BJ (cell line): ENCODE measurements at regions of chr14 and their contacts with region 1.

Region 1: GRCh38 chr14:23379366-23380196 is 2.7 kb downstream of the CMTM5 start:
- DNase-seq: no peak
- H3K4me3 ChIP-seq: no peak overlapping the region
- H3K27me3 ChIP-seq: peaks cover 9% of the 10 kb centered on the region
- CTCF ChIP-seq: peak; percentile 94

Region 2: GRCh38 chr14:23209651-23210423 is 169.7 kb before region 1 on chr14:
- CTCF ChIA-PET with region 1: no interaction called
- POLR2A ChIA-PET with region 1: no interaction called
- DNase-seq: no peak
- H3K4me3 ChIP-seq: no peak overlapping the region
- H3K27me3 ChIP-seq: peaks cover 2% of the 10 kb centered on the region; the same call in 1 of the 2 replicates
- CTCF ChIP-seq: no peak

Region 3: DNA sequence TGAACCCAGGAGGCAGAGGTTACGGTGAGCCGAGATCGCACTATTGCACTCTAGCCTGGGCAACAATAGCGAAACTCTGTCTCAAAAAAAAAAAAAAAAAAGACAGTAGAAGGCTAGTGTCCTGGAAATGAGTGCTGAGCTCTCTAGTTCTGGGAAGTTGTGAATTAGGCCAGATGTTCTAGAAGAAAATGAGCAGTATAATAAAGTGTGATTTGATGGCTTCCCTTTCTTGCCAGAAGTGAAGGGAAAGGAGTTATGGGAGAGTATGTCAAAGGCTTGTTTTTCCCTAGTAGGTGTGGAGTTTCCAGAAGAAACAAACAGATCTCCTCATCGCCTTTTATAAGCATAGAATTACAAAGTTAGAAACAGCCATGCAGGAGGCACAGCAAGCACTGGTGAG is 121.3 kb before region 1 on chr14:
- CTCF ChIA-PET with region 1: interaction called, 16 read pairs
- POLR2A ChIA-PET with region 1: no interaction called
- DNase-seq: no peak
- H3K4me3 ChIP-seq: no peak overlapping the region
- H3K27me3 ChIP-seq: peaks cover 7% of the 10 kb centered on the region; the same call in 1 of the 2 replicates
- CTCF ChIP-seq: no peak

Region 4: DNA sequence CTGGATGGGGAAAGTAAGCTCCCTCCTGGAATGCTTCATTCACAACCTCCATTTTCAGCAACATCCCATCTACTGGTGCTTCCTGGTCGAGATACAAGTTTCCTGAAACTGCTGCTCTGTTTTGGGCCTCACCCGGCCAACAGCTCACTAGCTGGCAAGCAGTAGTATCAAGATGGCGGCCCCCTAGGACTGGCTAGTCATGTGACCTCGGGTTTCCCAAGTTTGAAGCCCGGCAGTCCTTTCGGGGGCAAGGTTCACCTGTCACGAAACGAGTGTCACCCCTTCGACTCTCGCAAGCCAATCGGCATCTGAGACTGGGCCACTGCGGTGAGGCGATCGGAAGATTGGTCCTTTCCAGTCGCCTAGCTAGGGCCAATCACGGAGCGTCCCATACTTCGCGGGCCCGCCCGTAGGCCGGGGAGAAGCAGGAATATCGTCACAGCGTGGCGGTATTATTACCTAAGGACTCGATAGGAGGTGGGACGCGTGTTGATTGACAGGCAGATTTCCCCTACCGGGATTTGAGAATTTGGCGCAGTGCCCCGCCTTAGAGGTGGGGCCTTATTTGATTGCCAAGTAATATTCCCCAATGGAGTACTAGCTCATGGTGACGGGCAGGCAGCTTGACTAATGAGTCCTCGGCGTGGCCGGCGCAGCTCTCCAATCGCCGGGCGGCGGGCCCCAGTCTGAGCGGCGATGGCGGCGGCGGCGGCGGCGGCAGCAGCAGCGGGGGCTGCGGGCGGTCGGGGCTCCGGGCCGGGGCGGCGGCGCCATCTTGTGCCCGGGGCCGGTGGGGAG is 58.6 kb before region 1 on chr14 and contains the start of gene PABPN1:
- CTCF ChIA-PET with region 1: interaction called, 132 read pairs
- POLR2A ChIA-PET with region 1: no interaction called
- DNase-seq: peak; percentile 98
- H3K4me3 ChIP-seq: peak within 1 kb of the TSS; percentile 60
- H3K27me3 ChIP-seq: no peaks in the 10 kb centered on the region
- CTCF ChIP-seq: no peak
- polyA plus RNA-seq, gene PABPN1: 119 and 143 TPM in 2 replicates

Region 5: DNA sequence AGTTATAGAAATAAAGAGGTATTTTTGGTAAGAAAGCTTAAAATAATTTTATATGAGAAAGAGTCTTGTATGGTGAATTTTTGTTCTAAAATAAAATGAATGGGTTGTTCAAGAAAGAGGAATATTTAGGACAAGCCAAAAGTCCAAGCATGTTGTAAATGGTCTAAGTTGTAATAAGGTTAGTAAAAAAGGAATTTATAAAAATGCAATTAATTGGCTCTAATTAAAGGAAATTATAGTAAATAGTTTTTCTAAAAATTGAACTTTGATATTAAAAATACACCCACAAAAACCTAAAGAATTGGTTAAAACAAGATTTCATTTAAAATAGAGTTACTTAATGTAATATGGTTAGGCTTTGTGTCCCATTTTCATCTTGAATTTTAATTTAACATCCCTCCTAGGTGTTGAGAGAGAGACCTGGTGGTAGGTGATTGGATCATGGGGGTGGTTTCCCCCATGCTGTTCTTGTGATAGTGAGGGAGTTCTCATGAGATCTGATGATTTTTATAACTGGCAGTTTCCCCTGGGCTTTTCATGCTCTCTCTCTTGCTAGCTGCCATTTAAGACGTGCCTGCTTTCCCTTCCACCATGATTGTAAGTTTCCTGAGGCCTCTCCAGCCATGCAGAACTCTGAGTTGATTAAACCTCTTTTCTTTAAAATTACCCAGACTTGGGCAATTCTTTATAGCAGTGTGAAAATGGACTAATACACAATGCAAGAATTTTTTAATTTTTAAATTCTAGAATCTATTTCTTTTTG is 39.9 kb before region 1 on chr14:
- CTCF ChIA-PET with region 1: interaction called, 132 read pairs
- POLR2A ChIA-PET with region 1: no interaction called
- DNase-seq: no peak
- H3K4me3 ChIP-seq: no peak overlapping the region
- H3K27me3 ChIP-seq: no peaks in the 10 kb centered on the region
- CTCF ChIP-seq: no peak

Region 6: DNA sequence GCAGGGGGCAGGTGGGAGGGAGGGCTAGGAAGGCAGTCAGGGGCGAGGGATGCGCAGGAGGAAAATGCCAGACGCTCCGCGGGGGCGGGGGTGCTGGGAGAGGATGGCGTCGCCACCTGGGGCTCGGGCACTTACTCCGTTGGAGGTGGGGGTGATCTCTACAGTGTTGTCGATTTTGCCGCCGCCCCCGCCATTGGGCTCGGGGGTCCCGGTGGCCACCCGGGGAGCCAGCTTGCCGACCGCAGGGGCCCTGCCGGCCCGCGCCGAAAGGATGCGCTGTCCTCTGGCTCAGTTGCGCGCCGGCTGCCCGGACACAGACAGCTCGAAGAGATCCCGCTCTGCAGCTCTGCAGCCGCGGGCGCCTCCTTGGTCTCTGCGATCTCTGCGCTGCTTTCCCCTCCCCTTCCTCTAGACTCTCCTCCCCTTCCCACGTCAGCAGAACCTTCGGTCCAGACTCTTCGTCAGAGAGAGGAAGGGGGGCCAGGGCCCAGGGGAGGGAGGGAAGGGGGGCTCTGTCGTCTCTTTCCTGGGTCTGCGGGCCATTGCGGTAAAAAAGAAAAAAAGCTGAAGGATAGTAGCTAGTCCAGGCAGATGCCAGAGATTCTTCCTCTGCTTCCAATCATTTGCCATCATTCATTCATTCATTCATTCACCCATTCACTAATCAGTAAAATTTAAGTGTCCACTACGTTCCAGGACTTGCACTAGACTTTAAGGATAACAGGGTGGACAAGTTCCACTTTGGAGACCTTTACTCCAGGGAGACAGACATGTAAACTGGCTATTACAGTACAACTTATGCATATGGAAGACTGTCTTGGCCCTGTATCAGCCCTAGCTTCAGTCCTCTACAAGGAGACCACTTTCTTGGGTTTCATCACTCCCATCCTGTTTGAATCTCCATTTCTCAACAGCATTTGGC is 26.8 kb before region 1 on chr14 and contains the start of gene SLC22A17:
- CTCF ChIA-PET with region 1: interaction called, 15 read pairs
- POLR2A ChIA-PET with region 1: interaction called, 3 read pairs
- DNase-seq: peak; percentile 33
- H3K4me3 ChIP-seq: peak within 1 kb of the TSS; percentile 74
- H3K27me3 ChIP-seq: peaks cover 1% of the 10 kb centered on the region; the same call in 1 of the 2 replicates
- CTCF ChIP-seq: 0 out of 2 replicates have a peak, but pooled peaks have one; percentile 33
- polyA plus RNA-seq, gene SLC22A17: 9.0 and 14.0 TPM in 2 replicates